ENCODE measurements at regions of chr18 and their contacts with region 1.

Region 1: DNA sequence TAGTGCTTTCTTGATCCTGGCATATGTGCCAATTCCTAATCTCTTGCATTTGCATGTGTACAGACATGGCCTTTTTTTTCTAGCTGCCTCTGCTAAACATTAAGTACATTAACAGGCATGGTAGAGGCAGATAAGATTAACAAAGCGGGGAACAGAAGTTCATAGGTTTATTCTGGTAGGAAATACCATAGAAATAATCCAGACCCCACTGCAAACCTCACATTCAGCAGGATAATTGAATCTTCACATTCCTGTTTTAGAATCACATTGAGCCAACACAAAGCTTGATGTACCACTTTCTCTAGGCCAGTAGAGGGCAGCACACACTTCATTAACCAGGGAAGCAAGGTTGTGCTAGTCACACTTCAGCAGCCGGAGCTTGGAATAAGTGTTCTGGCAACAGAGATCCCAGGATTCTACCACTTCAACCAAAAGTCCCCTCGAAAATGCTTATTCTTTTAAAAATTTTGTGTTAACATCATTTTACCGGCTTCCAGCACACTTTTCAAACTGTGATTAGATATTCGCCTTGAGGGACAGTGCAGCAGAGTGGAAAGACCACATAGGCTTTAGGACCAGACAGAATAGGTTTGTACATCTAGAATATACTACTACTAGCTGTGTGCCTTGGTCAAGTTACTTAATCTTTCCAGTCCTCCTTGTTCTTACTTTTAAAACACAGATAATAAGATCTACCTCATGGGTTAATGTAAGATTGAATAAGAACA is 420.2 kb upstream of the CHST9 start:
- DNase-seq: peak in 1 of 2 donors; percentile 46
- ATAC-seq: peak; percentile 51 to 89 (median 82)
- H3K4me3 ChIP-seq: no peak overlapping the region
- H3K27ac ChIP-seq: no peak overlapping the region
- H3K4me1 ChIP-seq: no peaks in the 10 kb centered on the region
- H3K27me3 ChIP-seq: no peaks in the 10 kb centered on the region
- CTCF ChIP-seq: peak; percentile 52 to 83 (median 80)

Region 2: DNA sequence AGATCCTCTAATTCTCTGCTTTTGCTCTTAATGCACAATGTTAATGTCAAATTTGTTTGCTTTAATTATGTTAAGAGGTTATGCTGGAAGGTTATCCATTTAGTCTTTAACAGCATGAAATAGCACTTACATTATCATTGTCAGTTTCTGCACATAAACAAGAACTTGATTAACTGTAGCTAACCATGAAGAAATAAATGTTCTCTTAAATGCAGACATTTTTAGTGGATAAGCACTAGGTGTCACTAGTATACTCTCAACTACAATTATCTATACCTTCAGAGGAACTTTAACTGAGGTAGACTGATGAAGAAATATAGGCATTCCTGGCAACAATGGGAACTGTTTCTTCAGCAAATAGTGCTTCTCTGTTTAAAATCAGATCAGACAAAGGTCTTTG is 241.4 kb before region 1 on chr18:
- intact Hi-C with region 1: loop called in 1 of 10 experiments (anchors 5 kb)
- DNase-seq: no peak
- ATAC-seq: no peak
- H3K4me3 ChIP-seq: no peak overlapping the region
- H3K27ac ChIP-seq: no peak overlapping the region
- H3K4me1 ChIP-seq: no peaks in the 10 kb centered on the region
- H3K27me3 ChIP-seq: no peaks in the 10 kb centered on the region
- CTCF ChIP-seq: peak in 8 of 9 donors; percentile 4 to 50 (median 38)

Region 3: DNA sequence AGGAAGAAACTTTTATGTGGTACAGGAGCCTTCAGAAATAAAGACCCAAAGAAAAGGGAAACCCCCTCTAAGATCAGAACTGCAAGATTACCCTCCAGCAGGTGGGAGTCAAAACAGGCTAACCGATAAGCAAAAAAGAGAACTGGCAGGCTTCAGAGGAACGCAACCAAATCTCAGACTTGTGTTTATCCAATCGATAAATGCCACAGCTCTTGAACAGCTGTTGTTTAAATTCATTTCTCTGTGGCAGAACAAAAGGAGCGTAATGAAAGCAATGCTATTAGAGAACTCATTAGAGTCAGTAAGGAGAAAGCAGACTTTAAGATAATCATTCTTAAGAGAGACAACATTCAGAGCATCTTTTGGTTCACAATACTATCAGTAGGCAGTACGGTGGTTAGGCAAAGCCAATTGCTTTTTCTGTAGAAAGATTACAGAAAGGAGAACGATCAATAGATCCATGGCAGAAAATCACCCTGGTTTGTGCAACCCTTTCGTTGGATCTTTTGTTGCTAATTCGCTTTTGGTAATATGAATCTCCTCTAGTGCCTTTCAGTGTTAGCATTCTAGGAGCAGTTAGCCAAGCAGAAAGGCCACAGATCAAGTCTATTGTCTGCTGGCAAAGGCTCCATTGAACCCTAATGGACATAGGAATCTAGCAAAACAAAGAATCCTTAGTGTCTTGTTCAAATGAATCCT is 56.2 kb after region 1 on chr18:
- intact Hi-C with region 1: no loop called
- DNase-seq: no peak
- ATAC-seq: no peak
- H3K4me3 ChIP-seq: no peak overlapping the region
- H3K27ac ChIP-seq: no peak overlapping the region
- H3K4me1 ChIP-seq: peaks cover 0 to 4% (median 0%) of the 10 kb centered on the region in 9 donors
- H3K27me3 ChIP-seq: no peaks in the 10 kb centered on the region
- CTCF ChIP-seq: no peak

Region 4: GRCh38 chr18:27685807-27686412 is 80.6 kb after region 1 on chr18:
- intact Hi-C with region 1: loop called in 1 of 10 experiments (anchors 10 kb)
- DNase-seq: no peak
- ATAC-seq: no peak
- H3K4me3 ChIP-seq: no peak overlapping the region
- H3K27ac ChIP-seq: no peak overlapping the region
- H3K4me1 ChIP-seq: peaks cover 0 to 14% (median 0%) of the 10 kb centered on the region in 9 donors
- H3K27me3 ChIP-seq: no peaks in the 10 kb centered on the region
- CTCF ChIP-seq: peak; percentile 34 to 63 (median 53)

Region 5: DNA sequence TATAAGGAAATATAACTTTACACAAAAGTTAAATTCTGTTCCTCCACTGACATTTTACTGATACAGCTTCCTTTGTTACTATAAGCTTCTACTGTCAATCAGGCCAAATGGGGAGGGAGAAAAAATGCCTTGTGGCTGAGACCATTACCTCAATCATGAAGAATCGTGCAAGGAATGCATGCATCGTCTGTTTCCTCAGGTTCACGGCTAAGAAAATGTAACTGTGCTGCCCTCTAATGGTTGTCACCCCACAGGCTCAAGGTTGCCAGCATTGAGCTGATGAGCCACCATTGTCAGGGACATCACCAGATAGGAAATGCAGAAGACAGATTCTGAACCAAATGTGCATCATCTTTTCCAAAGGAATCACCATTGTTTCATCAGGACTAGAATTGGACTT is 144.7 kb after region 1 on chr18:
- intact Hi-C with region 1: loop called (anchors 1 to 5 kb)
- DNase-seq: peak in 1 of 2 donors; percentile 29
- ATAC-seq: peak in 7 of 8 donors; percentile 38 to 84 (median 77)
- H3K4me3 ChIP-seq: no peak overlapping the region
- H3K27ac ChIP-seq: no peak overlapping the region
- H3K4me1 ChIP-seq: no peaks in the 10 kb centered on the region
- H3K27me3 ChIP-seq: no peaks in the 10 kb centered on the region
- CTCF ChIP-seq: peak in 7 of 9 donors; percentile 54 to 73 (median 65)

Measured in heart right ventricle (tissue), 16 donors.